ENCODE measurements at regions of chr10 and their contacts with region 1.

Region 1: GRCh38 chr10:17074541-17074847 is 55.1 kb downstream of the CUBN start:
- DNase-seq: no peak
- ATAC-seq: no peak

Region 2: DNA sequence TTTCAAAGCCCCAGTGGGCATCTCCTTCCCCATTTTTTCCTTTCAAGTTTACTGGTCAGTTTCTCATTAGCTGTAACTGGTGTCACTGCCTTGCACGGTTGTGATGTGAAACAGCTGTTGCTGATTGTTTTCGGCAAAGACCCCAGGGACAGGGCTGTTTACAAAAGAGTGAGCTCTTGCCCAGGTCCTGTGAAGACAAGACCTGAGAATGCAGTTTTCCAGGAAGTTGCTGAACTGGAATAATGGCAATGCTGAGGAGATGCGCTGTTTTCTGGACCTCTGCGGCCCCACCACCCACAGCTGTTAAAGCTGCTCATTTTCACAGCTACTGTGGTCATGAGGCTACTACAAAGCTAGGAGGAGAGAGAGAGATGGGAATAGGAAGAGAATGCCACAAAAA is 140.7 kb before region 1 on chr10:
- intact Hi-C with region 1: no loop called
- DNase-seq: no peak
- ATAC-seq: peak; percentile 39

Region 3: GRCh38 chr10:17029581-17030271 is 44.8 kb before region 1 on chr10:
- intact Hi-C with region 1: loop called (anchors 5 kb)
- DNase-seq: peak; percentile 87
- ATAC-seq: peak; percentile 90